MCF 10A (cell line): ENCODE measurements at regions of chr10 and their contacts with region 1.

Region 1: GRCh38 chr10:116787893-116788665 is 45.7 kb upstream of the HSPA12A start:
- DNase-seq: peak; percentile 57
- H3K4me3 Mint-ChIP-seq: peak overlapping the region; percentile 69
- H3K27ac Mint-ChIP-seq: no peak overlapping the region
- H3K4me1 Mint-ChIP-seq: peaks cover 6% of the 10 kb centered on the region
- H3K27me3 Mint-ChIP-seq: no peaks in the 10 kb centered on the region
- CTCF ChIP-seq: peak; percentile 98

Region 2: DNA sequence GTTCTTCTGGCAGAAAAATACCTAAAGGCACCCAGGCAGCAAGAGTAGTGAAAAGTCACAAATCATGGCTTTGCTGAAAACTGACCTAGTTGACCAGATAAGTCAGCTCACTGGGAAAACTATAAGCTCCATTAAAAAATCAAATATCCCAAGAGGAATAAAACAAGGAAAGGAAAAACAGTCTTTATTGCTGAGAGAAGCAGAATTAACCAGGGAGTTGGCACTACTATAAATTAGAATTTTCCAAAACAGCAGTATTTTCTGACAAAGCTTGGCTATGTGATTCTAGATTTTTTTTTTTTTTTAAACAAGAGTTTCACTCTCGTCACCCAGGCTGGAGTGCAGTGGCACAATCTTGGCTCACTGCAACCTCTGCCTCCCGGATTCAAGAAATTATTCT is 451.2 kb before region 1 on chr10:
- CTCF ChIA-PET with region 1: no interaction called
- POLR2A ChIA-PET with region 1: no interaction called
- intact Hi-C with region 1: no loop called
- DNase-seq: no peak
- H3K4me3 Mint-ChIP-seq: no peak overlapping the region
- H3K27ac Mint-ChIP-seq: no peak overlapping the region
- H3K4me1 Mint-ChIP-seq: no peaks in the 10 kb centered on the region
- H3K27me3 Mint-ChIP-seq: no peaks in the 10 kb centered on the region
- CTCF ChIP-seq: no peak

Region 3: DNA sequence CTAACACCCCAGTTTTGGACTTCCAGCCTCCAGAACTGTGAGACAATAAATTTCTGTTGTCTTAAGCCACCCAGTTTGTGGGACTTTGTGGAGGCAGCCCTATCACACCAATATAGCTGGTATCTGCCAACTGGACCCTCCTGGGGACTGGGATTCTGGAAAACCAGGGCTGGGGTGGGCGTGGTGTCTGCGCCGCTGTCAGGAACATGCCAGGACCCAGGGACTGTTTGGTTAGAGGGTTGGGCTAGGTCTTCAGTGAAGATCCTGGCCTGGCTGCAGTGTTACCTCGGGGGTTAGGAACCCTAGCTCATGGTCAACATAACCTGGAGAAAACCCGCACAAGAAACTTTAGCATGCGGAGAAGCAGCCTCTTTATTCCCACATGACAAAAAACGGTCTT is 124.7 kb before region 1 on chr10:
- CTCF ChIA-PET with region 1: interaction called, 12 read pairs
- POLR2A ChIA-PET with region 1: no interaction called
- intact Hi-C with region 1: no loop called
- DNase-seq: no peak
- H3K4me3 Mint-ChIP-seq: no peak overlapping the region
- H3K27ac Mint-ChIP-seq: no peak overlapping the region
- H3K4me1 Mint-ChIP-seq: no peaks in the 10 kb centered on the region
- H3K27me3 Mint-ChIP-seq: no peaks in the 10 kb centered on the region
- CTCF ChIP-seq: no peak

Region 4: DNA sequence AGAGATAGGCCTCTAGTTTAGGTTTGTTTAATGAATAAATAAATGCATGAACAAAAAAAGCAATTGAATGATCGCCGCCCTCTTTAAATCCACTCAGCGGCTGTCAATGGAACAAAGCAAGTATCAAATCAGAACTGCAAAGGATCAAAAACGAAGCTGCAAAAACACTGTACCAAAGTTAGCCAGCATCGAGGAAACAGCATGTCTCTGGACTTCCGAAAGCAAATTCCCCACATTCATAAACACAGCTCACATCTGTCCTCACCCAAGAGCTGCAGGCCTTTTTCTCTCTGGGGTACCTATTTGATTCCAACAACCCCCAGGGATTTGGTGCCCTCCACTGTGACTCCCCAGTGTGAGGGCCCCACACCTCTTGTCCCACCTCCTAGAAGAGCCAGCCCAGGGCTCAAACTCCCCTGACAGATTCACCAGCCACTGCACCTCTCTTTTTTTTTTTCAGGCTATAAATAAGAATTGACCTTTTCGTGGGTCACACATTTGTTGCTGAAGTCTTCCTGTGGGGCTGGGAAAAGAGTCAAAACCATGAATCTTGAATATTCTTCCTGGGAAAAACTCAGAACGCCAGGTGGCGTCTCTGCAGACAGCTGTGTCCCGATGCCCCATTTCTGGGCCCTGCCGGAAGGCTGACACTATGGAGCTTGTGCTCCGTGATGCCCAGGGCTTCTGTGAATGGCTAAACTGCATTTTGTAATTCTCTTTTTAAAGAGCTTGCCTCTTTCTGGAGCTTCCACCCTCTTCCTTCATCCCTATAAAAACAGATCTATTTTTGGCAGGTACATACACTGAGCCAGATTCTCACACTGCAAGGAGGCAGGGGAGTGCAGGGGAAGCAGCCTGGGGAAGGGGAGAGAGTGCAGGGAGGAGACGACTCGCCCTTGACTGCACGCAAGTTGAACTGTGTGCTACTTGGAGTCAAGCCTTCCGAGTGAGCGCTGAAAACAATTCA is 97.4 kb before region 1 on chr10:
- CTCF ChIA-PET with region 1: interaction called, 339 read pairs
- POLR2A ChIA-PET with region 1: interaction called, 4 read pairs
- intact Hi-C with region 1: no loop called
- DNase-seq: no peak
- H3K4me3 Mint-ChIP-seq: no peak overlapping the region
- H3K27ac Mint-ChIP-seq: no peak overlapping the region
- H3K4me1 Mint-ChIP-seq: no peaks in the 10 kb centered on the region
- H3K27me3 Mint-ChIP-seq: no peaks in the 10 kb centered on the region
- CTCF ChIP-seq: no peak

Region 5: DNA sequence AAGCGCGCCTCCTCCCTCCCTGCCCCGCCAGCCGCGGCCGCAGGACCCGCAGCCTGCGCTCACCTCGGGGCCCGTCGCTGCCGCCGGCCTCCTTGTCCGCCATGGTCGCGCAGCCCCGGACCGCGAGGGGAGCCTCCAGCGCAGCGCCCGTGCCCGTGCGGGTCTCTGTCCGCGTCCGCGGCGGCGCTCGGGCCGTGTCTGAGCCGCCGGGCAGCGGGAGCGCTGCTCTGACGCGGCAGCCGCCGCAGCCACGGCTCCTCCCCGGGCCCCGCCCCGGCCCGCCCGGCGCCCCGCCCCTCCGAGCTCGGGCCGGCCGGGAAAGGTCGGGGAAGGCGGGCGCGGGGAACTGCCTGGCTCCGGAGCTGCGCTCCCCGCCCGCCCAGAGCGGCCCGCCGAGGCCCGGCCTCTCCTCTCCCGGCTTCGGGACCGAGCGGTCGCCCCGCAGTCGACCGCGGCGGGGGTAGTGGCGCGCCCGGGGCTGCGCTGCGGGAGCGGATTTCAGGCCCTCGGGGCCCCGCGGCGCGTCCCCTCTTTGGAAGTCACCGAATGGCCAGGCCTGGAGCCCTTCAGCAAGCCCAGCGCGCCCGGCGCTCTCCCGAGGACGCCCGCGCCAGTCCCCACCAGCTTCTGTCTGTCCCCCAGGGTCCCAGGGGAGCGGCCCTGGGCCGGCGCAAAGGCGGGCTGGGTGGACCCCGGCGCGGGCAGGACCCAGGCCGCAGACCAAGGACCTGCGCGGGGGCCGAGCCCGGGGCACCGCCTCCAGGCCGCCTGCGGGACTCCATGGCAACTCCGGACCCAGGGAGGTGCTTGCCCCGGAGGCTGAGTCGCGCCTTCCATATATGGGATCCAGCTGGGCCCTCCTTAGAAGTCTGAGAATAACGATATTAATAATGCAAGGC is 45.5 kb before region 1 on chr10 and contains the start of gene HSPA12A:
- CTCF ChIA-PET with region 1: interaction called, 42 read pairs
- POLR2A ChIA-PET with region 1: interaction called, 5 read pairs
- intact Hi-C with region 1: loop called (anchors 1 kb)
- DNase-seq: peak; percentile 79
- H3K4me3 Mint-ChIP-seq: peak within 1 kb of the TSS; percentile 71
- H3K27ac Mint-ChIP-seq: no peak within 1 kb of the TSS
- H3K4me1 Mint-ChIP-seq: no peaks in the 10 kb centered on the region
- H3K27me3 Mint-ChIP-seq: no peaks in the 10 kb centered on the region
- CTCF ChIP-seq: no peak
- total RNA-seq, gene HSPA12A: 9.1 and 13.1 TPM in 2 replicates

Region 6: GRCh38 chr10:116771101-116771958 is 16.7 kb before region 1 on chr10:
- CTCF ChIA-PET with region 1: interaction called, 111 read pairs
- POLR2A ChIA-PET with region 1: interaction called, 4 read pairs
- intact Hi-C with region 1: no loop called
- DNase-seq: peak; percentile 98
- H3K4me3 Mint-ChIP-seq: peak overlapping the region; percentile 28
- H3K27ac Mint-ChIP-seq: peak overlapping the region; percentile 92
- H3K4me1 Mint-ChIP-seq: peaks cover 41% of the 10 kb centered on the region
- H3K27me3 Mint-ChIP-seq: no peaks in the 10 kb centered on the region
- CTCF ChIP-seq: no peak

Region 7: DNA sequence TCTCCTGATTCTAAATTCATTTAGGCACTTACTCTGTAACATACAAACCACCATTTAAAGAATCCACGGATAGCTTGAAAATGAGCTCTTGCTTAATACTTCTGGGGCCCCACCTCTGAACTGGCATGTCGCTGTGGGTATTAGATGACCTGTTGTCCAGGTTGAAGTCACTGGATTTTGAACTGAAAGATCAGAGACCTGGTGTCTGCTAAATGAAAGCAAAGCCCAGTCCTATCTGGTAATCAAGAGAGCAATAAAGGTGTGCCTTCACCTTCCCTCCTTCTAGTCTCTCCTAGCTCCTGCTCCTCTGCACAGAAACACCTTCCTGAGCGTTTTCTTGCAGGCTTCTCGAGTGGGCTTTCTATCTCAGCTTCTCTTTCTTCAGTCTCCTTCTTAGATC is 65.6 kb after region 1 on chr10:
- CTCF ChIA-PET with region 1: no interaction called
- POLR2A ChIA-PET with region 1: no interaction called
- intact Hi-C with region 1: no loop called
- DNase-seq: no peak
- H3K4me3 Mint-ChIP-seq: no peak overlapping the region
- H3K27ac Mint-ChIP-seq: no peak overlapping the region
- H3K4me1 Mint-ChIP-seq: peaks cover 3% of the 10 kb centered on the region
- H3K27me3 Mint-ChIP-seq: no peaks in the 10 kb centered on the region
- CTCF ChIP-seq: no peak

Region 8: GRCh38 chr10:117086545-117086944 is 298.5 kb after region 1 on chr10:
- CTCF ChIA-PET with region 1: no interaction called
- POLR2A ChIA-PET with region 1: no interaction called
- intact Hi-C with region 1: no loop called
- DNase-seq: no peak
- H3K4me3 Mint-ChIP-seq: no peak overlapping the region
- H3K27ac Mint-ChIP-seq: peak overlapping the region; percentile 88
- H3K4me1 Mint-ChIP-seq: peaks cover 10% of the 10 kb centered on the region
- H3K27me3 Mint-ChIP-seq: no peaks in the 10 kb centered on the region
- CTCF ChIP-seq: no peak

Region 9: DNA sequence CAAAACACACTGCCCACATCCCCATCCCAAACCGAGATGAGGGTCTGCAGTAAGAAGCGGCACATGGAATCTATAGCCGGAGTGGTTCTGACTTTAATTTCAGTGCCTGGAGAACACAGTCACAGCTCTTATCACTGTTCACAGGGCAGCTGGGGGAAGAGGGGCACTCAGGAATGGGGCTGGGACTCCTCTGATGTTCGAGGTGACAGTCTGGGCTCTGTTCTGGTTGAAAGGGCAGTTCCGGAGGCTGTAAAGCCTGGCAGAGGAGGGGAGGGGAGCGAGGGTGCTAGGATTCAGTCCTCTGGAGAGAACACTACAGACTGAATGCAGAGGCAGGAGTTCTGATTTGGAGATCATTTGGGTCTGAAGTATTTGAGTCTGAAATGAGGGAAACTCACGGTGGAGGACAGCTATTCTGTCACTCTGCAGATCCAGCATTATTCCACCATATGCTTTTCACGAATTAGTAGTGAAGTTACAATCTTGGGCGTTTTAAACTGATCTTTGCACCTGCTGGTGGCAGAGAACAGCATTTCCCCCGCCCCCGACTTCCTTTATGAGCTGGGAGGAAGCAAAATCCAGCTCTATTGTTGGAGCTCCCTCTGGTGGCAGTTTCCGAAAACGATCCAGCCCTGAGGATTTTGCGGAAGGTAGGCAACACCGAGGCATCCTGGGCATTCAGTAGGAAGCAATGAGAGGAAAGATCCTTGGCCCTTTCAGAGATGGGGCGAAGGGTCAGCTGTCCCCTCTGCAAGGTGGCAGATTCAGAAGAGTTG is 386.5 kb after region 1 on chr10:
- CTCF ChIA-PET with region 1: interaction called, 578 read pairs
- POLR2A ChIA-PET with region 1: no interaction called
- intact Hi-C with region 1: no loop called
- DNase-seq: peak; percentile 89
- H3K4me3 Mint-ChIP-seq: peak overlapping the region; percentile 71
- H3K27ac Mint-ChIP-seq: no peak overlapping the region
- H3K4me1 Mint-ChIP-seq: no peaks in the 10 kb centered on the region
- H3K27me3 Mint-ChIP-seq: peaks cover 33% of the 10 kb centered on the region
- CTCF ChIP-seq: peak; percentile 78